Activated naive CD4-positive, alpha-beta T cell treated with anti-CD3 and anti-CD28 coated beads, Interleukin-2, amount 10 ng/mL, durations not matched to agents 7 days and 5 days (primary cell): ENCODE measurements at regions of chr19 and their contacts with region 1.

Region 1: GRCh38 chr19:17605761-17606745 is 50.6 kb downstream of the COLGALT1 start:
- DNase-seq: peak; percentile 85
- H3K4me3 Mint-ChIP-seq: peak overlapping the region; percentile 68
- H3K27ac Mint-ChIP-seq: peak overlapping the region; percentile 69
- H3K4me1 Mint-ChIP-seq: peaks cover 10% of the 10 kb centered on the region
- H3K27me3 Mint-ChIP-seq: peaks cover 59% of the 10 kb centered on the region

Region 2: DNA sequence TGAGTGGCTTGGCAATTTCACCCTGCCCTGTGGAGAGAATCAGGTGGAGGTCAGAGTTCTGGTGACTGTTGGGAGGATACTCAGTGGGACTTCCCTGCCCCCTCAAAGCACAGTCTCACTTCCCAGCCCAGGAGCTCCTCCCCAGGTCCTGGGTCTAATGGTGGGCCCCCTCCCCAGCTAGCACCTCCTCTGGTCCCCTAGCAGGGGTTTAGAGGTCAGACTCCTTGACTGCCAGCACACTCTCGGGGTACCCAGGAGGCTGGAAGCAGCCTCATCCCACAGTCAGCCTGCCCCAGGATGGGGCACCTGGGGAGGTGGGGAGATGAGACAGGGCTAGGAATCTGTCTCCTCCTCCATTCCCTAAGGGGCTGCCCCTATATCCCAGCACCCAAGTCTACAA is 14.6 kb after region 1 on chr19:
- CTCF ChIA-PET with region 1: interaction called, 13 read pairs
- DNase-seq: no peak
- H3K4me3 Mint-ChIP-seq: no peak overlapping the region
- H3K27ac Mint-ChIP-seq: no peak overlapping the region
- H3K4me1 Mint-ChIP-seq: peaks cover 5% of the 10 kb centered on the region
- H3K27me3 Mint-ChIP-seq: peaks cover 47% of the 10 kb centered on the region